Psoas muscle (tissue), 8 donors: ENCODE measurements at regions of chr1 and their contacts with region 1.

Region 1: DNA sequence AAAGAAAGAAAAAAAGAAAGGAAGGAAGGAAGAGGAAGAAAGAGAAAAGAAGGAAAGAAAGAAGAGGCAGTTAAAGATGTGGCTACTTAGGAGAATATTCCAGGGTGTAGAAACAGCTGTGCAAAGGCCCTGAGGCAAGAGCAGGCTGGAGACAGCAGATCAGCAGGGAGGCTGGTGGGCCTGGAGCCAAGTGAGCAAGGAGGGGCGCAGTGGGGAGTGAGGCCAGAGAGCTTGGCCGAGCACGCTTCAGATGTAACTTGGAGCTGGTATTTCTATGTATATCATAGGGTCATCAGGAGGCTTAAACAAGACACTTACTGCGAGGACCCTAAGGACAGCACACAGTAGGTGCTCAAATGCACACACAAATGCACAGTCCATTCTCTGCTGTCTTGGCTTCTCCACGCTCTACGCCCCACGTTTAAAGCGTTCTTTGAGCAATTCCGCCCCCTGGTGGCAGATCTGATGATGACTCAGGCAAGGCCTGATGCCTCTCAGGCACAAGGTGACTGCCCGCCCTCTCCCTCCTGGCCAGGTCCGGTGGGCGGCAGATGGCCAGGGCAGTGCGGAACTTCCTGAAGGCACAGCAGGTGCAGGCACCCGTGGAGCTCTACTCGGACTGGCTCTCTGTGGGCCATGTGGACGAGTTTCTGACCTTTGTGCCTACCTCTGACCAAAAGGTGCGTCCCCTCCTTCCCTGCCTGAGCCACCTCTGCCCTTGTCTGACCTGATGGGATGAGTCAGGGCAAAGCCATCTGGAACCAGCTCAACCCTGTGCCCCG is 11.9 kb upstream of the PADI3 start:
- DNase-seq: peak; percentile 83 to 92
- ATAC-seq: peak; percentile 71 to 86 (median 77)
- H3K4me3 ChIP-seq: no peak overlapping the region
- H3K27ac ChIP-seq: no peak overlapping the region
- H3K4me1 ChIP-seq: peaks cover 3% of the 10 kb centered on the region
- H3K27me3 ChIP-seq: peaks cover 0 to 2% (median 0%) of the 10 kb centered on the region in 3 donors
- CTCF ChIP-seq: peak; percentile 94

Region 2: DNA sequence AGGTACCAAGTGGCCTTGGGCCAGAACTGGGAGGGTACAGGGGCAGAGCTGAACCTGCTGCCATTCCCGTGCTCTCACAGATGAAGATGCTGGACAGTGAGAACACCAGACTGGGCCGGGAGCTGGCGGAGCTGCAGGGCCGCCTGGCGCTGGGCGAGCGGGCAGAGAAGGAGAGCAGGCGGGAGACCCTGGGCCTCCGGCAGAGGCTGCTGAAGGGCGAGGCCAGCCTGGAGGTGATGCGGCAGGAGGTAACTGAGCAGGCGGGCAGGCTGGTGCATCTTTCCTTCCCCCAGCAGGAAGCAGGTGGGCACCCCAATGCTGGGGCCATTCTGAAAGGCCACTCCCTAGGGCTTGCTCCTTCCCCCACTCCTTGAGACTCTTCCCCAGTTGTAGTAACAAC is 278.5 kb before region 1 on chr1:
- intact Hi-C with region 1: loop called in 1 of 2 experiments (anchors 10 kb)
- DNase-seq: no peak
- ATAC-seq: no peak
- H3K4me3 ChIP-seq: no peak overlapping the region
- H3K27ac ChIP-seq: no peak overlapping the region
- H3K4me1 ChIP-seq: peaks cover 5% of the 10 kb centered on the region
- H3K27me3 ChIP-seq: no peaks in the 10 kb centered on the region
- CTCF ChIP-seq: no peak

Region 3: DNA sequence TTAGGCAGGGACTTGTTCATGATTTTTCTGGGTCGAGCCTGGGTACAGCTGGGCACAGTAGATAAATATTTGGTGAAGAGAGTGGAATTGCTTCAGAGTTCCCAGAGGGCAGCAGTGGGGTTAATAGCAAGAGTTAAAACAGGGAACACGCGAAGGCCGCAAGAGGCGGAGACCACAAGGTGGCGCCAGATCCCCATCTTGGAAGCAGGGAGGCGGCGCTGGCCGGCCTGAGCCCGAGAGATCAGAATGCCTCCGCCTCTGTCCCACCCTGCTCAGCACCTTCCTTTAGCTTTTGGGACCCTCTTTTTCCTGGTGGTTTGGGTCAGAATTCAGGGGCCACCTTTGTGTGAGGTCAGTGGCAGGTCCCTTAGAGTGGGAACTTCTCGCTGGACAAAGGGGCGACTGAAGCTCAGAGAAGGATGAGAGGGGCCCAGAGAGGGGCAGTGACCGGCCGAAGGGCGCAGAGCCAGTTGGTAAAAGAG is 111.2 kb before region 1 on chr1:
- intact Hi-C with region 1: loop called (anchors 1 kb)
- DNase-seq: peak; percentile 88 to 93
- ATAC-seq: peak; percentile 49 to 73 (median 60)
- H3K4me3 ChIP-seq: no peak overlapping the region
- H3K27ac ChIP-seq: no peak overlapping the region
- H3K4me1 ChIP-seq: peaks cover 21% of the 10 kb centered on the region
- H3K27me3 ChIP-seq: no peaks in the 10 kb centered on the region
- CTCF ChIP-seq: peak; percentile 95

Region 4: DNA sequence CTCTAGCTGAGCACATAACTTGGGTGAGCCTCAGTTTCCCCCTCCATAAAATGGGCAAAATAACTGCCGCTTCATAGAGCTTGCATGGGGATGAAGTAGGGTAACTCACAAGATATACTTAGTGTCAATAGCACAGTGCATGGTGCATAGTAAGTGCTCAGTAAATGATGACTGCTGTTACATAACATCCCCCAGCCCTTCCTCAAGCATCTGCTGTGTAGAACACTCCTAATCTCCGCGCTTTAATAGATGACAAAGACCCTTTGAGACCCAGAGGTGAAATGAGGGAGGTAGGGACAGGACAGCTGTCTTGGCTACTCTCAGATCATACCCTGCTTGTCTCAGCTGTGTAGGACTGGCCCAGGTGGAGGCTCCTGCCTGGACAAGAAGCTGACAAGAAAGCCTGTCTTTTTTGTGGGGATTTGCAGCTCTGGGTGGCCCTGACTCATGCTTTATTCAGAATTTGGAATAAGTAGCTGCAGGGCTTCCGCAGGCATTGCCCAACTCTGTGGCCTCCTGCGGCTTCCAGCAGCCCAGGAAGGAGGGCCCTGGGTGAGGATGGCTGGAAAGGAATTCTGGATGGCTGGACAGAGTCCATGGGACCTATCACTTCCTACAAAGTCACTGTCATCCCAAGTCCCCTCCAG is 50.3 kb after region 1 on chr1:
- intact Hi-C with region 1: no loop called
- DNase-seq: no peak
- ATAC-seq: no peak
- H3K4me3 ChIP-seq: no peak overlapping the region
- H3K27ac ChIP-seq: no peak overlapping the region
- H3K4me1 ChIP-seq: no peaks in the 10 kb centered on the region
- H3K27me3 ChIP-seq: peaks cover 0 to 49% (median 1%) of the 10 kb centered on the region in 3 donors
- CTCF ChIP-seq: no peak